Sigmoid colon (tissue), 7 donors: ENCODE measurements at regions of chr20 and their contacts with region 1.

Region 1: DNA sequence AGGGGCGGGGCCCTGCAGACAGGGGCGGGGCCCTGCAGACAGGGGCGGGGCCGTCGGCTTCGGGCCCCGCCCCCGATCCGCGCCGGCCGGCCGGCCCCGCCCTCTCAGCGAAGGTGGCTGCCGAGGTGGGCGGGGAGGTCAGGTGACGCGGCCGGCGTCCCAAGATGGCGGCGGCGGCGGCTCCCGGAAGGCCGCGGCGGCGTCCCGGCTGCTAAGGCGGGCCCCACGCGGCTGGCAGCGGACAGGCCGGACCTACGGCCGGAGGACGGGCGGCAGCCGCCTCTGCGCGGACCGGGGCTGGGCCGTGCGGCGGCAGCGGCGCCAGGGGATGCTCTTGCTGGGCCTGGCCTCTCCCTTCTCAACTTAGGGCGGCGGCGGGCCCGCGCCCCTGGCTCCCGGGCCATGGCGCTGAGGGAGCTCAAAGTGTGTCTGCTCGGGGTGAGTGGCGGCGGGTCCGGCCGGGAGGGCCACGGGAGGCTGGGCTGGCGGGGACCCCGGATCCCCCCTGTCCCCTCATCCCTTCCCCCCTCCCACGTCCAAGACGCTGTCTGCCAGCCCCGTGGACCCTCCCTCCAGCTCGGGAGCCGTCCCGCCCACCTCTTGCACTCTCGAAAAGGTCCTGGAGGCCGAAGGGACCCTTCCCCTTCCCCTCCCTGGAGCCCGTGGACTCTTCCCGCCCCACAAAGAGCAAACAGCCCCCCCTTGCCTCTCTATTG is at the start of gene RAB22A:
- DNase-seq: peak; percentile 92
- H3K4me3 ChIP-seq: peak within 1 kb of the TSS; percentile 60 to 99 (median 80)
- H3K27ac ChIP-seq: peak within 1 kb of the TSS; percentile 79 to 90 (median 84)
- H3K4me1 ChIP-seq: peaks cover 0 to 42% (median 28%) of the 10 kb centered on the region in 4 donors
- H3K27me3 ChIP-seq: no peaks in the 10 kb centered on the region
- CTCF ChIP-seq: no peak
- EP300 ChIP-seq: no peak
- POLR2A ChIP-seq: no peak
- total RNA-seq, gene RAB22A: 17.6 to 21.6 (median 21.0) TPM

Region 2: DNA sequence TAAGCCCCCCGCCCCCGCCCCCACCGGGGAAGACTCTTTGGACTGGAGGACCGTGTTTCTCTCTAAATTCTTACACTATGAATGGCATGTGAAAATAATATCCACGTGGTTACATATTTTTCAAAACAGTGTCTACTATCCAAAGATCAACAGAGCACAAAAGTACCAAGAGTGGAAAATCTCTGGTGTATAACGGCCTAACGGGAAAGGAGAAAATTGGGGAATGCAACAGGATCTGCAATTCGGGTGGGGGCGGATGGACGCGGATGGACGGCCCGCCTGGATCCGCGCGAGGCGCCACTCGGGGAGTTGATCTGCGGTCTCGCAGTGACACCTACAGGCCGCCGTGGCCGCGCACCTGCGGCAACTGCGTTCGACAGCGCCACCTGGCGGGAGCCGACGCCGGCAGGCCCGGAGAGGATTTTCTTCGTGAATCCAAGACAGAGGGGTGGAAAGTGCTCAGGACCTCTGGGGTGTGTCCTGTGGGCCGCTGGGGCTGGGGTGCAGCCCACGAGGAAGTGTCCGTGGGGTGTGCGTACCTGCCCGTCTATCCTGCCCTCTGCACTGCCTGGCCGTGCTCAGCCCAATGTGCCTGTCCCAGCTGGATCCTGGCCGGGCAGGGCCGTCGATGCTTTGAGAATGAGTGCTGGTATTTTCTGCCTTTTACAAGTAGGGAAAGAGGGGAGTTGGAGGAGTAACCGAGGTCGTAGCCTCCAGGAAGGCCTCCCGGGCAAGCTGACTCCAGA is 99.9 kb before region 1 on chr20:
- intact Hi-C with region 1: no loop called
- DNase-seq: peak; percentile 91
- H3K4me3 ChIP-seq: no peak overlapping the region
- H3K27ac ChIP-seq: no peak overlapping the region
- H3K4me1 ChIP-seq: peaks cover 0 to 8% (median 1%) of the 10 kb centered on the region in 4 donors
- H3K27me3 ChIP-seq: peaks cover 0 to 16% (median 8%) of the 10 kb centered on the region in 3 donors
- CTCF ChIP-seq: peak; percentile 99 to 100 (median 100)
- EP300 ChIP-seq: no peak
- POLR2A ChIP-seq: no peak

Region 3: DNA sequence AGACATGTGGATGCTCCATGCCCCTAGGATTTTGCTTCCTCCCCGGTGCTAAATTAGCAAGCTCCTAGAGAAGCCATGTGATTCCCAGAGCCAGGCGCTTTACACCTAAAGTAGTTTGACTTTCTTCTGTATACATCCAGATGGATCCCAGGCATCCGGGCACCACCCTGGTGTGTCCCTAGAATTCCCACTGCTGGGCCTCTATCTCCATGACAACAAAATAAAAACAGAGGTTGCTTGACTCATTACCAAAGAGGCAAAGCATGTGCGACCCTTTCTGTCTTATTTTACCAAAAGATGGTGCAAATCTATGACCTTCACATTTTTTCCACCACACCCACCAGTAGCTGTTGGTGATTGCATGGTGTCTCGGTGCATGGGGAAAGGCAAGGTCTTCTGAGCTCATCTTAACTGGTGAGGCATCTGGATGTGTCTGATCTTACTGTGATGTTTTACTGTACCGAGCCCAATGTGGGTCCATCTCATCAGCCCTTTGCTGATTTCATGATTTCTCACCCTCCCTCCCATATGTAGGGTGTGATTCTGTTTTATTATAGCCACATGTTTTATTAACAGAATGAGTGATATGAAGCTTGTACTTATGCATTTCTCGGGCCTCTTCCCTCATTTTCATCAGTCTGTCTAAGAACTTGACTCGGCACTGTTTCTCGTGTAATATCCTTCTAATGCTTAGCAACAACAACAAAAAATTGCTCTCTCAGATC is 51.9 kb after region 1 on chr20:
- intact Hi-C with region 1: loop called (anchors 5 kb)
- DNase-seq: no peak
- H3K4me3 ChIP-seq: no peak overlapping the region
- H3K27ac ChIP-seq: peak overlapping the region in 2 of 4 donors; percentile 9 to 44
- H3K4me1 ChIP-seq: peaks cover 0 to 38% (median 26%) of the 10 kb centered on the region in 4 donors
- H3K27me3 ChIP-seq: no peaks in the 10 kb centered on the region
- CTCF ChIP-seq: no peak
- EP300 ChIP-seq: no peak
- POLR2A ChIP-seq: no peak

Region 4: GRCh38 chr20:58388882-58389323 is 79.2 kb after region 1 on chr20 and contains the start of gene VAPB:
- intact Hi-C with region 1: loop called (anchors 1 kb)
- DNase-seq: peak; percentile 98
- H3K4me3 ChIP-seq: peak within 1 kb of the TSS; percentile 76 to 91 (median 86)
- H3K27ac ChIP-seq: peak within 1 kb of the TSS; percentile 89 to 96 (median 94)
- H3K4me1 ChIP-seq: peaks cover 0 to 38% (median 36%) of the 10 kb centered on the region in 4 donors
- H3K27me3 ChIP-seq: no peaks in the 10 kb centered on the region
- CTCF ChIP-seq: no peak
- EP300 ChIP-seq: peak in 1 of 4 donors; percentile 62
- POLR2A ChIP-seq: no peak
- total RNA-seq, gene VAPB: 23.4 to 42.1 (median 32.7) TPM

Region 5: DNA sequence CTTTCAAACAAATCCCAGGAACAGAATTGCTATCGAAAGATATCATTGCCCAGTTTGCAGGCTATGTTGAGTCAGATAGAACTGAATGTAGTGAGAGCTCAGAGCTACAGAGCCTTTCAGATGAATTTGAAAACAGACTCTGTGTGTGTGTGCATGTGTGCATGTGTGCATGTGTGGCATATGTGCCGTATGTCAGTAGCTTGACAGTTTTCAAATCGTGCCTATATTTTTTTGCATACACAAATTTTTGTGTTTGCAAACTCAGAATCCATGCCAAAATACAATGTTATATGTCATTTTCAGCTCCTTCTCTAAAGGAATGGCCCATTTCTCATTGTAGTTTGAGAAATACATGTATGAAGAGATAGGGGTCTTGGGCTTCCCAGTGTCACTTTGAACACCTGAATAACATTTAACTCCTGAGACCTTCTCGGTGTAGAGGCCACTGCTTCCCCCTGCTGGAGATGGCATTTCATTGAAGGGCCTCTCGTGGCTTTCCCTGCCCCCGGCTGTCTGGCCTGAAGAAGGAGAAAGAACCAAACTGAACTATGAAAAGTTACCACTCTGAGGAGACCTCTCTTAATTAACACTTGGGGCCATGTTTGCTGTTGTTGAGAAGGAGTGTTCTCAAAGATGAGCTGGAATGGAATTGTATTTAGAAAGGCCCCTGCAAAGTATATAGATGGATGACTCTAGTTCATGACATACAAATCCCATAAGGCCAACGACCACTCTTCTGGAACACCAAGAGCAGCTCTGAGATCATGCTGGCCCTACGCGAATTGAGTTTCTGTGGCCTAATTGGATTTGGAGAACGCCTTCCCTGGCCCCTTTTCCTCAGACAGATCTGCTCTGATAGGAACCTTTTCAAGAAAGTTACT is 138.0 kb after region 1 on chr20:
- intact Hi-C with region 1: loop called (anchors 5 kb)
- DNase-seq: no peak
- H3K4me3 ChIP-seq: no peak overlapping the region
- H3K27ac ChIP-seq: peak overlapping the region in 1 of 4 donors; percentile 7
- H3K4me1 ChIP-seq: peaks cover 0 to 39% (median 17%) of the 10 kb centered on the region in 4 donors
- H3K27me3 ChIP-seq: no peaks in the 10 kb centered on the region
- CTCF ChIP-seq: peak in 3 of 4 experiments; percentile 49 to 62 (median 59)
- EP300 ChIP-seq: no peak
- POLR2A ChIP-seq: no peak

Region 6: DNA sequence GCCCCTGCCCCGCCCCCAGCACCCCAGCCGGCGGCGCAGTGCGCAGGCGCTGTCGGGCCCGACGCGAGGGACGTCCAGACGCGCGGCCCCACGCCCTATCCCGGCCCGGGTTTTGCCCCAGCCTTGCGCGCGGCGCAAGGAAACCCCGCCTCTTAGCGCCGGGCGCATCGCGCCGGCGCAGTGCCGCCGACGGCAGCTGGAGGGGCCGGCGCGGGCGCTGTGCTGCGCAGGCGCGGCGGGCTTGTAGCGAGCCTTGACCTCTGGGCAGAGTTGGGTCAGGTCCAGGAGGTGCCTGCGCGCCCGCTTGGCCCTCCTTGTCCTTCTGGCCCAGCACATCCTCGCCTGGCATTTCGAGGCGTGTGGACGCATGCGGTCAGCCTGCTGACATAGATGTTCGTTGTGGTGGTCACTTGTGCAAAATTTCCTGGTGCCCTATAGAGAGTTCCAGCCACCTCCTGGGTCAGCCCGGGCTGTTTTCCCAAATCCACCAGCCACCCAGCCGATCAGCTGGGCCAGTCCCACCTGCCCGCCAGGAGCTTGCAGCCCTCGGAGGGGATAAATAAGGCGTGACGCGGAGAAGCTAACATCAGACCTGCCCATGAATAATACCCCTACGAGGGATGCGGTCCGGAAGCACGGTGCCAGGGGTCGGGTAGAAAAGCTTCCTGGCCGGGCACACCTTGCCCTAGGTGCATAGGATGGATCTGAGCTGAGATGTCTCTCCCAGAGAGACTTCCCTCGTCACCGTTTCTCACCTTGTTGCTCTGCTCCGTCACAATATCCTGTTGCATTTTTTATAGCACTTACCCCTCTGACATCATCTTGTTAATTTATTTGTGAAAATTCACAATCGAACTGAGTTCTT is 733.3 kb after region 1 on chr20:
- intact Hi-C with region 1: loop called (anchors 10 kb)
- DNase-seq: peak; percentile 96
- H3K4me3 ChIP-seq: peak overlapping the region; percentile 73 to 94 (median 85)
- H3K27ac ChIP-seq: peak overlapping the region; percentile 81 to 86 (median 86)
- H3K4me1 ChIP-seq: peaks cover 0 to 39% (median 33%) of the 10 kb centered on the region in 4 donors
- H3K27me3 ChIP-seq: no peaks in the 10 kb centered on the region
- CTCF ChIP-seq: peak in 1 of 4 experiments; percentile 20
- EP300 ChIP-seq: no peak
- POLR2A ChIP-seq: no peak